ENCODE measurements at regions of chr1 and their contacts with region 1.

Region 1: DNA sequence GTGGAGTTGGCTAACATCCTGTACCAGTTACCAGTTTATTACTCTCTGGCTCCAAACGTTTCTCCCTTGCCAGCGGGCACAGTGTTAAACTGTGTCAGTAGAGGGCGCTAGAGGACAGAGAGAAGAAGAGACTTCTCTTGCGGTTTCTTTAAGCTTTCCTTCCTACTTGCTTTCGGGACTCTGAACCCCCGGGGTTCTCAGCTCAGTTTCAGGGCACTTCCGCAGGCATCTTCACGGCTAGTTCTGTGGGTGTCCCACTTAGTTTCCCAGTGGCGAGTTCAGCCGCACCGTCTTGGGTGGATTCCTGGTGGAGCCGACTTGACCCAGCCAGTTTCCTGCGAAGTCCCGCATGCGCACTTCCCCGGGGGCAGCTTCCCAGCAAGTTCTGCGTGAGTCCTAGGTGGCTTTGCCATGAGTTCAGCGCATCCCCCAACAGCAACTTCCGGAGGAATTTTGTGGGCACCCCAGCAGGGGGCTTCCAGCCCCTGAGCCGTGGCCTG is 37.9 kb upstream of the BTG2 start:
- DNase-seq: peak; percentile 78
- H3K4me3 Mint-ChIP-seq: peak overlapping the region; percentile 79
- H3K27ac Mint-ChIP-seq: peak overlapping the region; percentile 19
- H3K4me1 Mint-ChIP-seq: peaks cover 15% of the 10 kb centered on the region
- H3K27me3 Mint-ChIP-seq: peaks cover 6% of the 10 kb centered on the region

Region 2: GRCh38 chr1:203038891-203039608 is 228.3 kb before region 1 on chr1:
- intact Hi-C with region 1: loop called (anchors 1 kb)
- DNase-seq: peak; percentile 48
- H3K4me3 Mint-ChIP-seq: no peak overlapping the region
- H3K27ac Mint-ChIP-seq: no peak overlapping the region
- H3K4me1 Mint-ChIP-seq: peaks cover 14% of the 10 kb centered on the region
- H3K27me3 Mint-ChIP-seq: no peaks in the 10 kb centered on the region

Region 3: DNA sequence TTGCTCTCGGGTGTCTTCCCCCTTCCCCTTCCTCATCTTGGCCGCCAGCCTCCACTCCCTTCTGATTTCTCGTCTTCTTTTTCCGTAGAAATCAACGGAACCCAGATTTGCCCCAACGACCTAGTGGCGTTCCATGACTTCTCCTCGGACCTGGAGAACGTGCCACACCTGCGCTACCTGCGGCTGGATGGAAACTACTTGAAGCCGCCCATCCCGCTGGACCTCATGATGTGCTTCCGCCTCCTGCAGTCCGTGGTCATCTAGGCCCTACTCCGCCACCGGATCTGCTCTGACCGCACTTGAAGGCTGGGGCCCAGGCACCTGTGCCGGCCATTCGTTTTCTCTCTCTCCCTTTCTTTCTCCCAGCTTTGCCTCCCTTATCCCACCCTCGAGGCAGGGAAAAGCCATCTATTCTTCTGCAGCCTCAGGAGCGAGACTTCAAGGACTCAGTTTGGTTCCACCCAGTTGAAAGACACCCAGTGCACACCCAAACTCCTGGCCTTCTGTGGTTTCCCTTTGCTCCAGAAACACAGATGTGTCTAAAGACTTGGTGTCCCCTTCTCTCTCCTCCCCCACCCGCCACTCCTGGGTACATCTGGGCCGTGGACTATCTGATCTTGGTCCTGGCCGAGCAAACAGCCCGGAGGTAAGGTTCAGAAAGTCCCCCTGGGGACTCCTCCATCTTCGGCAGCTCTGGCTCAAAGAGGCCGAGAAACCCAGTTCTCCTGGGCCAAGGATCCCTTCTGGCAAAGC is 219.4 kb after region 1 on chr1:
- intact Hi-C with region 1: loop called (anchors 1 kb)
- DNase-seq: no peak
- H3K4me3 Mint-ChIP-seq: peak overlapping the region; percentile 61
- H3K27ac Mint-ChIP-seq: no peak overlapping the region
- H3K4me1 Mint-ChIP-seq: peaks cover 10% of the 10 kb centered on the region
- H3K27me3 Mint-ChIP-seq: peaks cover 8% of the 10 kb centered on the region